ENCODE measurements at regions of chr5 and their contacts with region 1.

Region 1: GRCh38 chr5:173001229-173001841 is 17.8 kb downstream of the ATP6V0E1 start:
- DNase-seq: no peak
- H3K4me3 ChIP-seq: no peak overlapping the region
- H3K27ac ChIP-seq: no peak overlapping the region
- H3K4me1 ChIP-seq: peaks cover 7 to 50% (median 11%) of the 10 kb centered on the region in 4 donors
- H3K27me3 ChIP-seq: no peaks in the 10 kb centered on the region
- CTCF ChIP-seq: no peak
- EP300 ChIP-seq: no peak
- POLR2A ChIP-seq: no peak

Region 2: GRCh38 chr5:172086194-172087019 is 914.9 kb before region 1 on chr5:
- in situ Hi-C with region 1: no loop called
- intact Hi-C with region 1: no loop called
- DNase-seq: no peak
- H3K4me3 ChIP-seq: no peak overlapping the region
- H3K27ac ChIP-seq: no peak overlapping the region
- H3K4me1 ChIP-seq: no peaks in the 10 kb centered on the region
- H3K27me3 ChIP-seq: no peaks in the 10 kb centered on the region
- CTCF ChIP-seq: no peak
- EP300 ChIP-seq: no peak
- POLR2A ChIP-seq: no peak

Region 3: GRCh38 chr5:173144200-173145176 is 143.2 kb after region 1 on chr5 and contains the start of gene BNIP1:
- in situ Hi-C with region 1: loop called in 1 of 4 experiments (anchors 10 kb)
- intact Hi-C with region 1: no loop called
- DNase-seq: peak; percentile 99
- H3K4me3 ChIP-seq: peak within 1 kb of the TSS; percentile 59 to 96 (median 77)
- H3K27ac ChIP-seq: peak within 1 kb of the TSS; percentile 87 to 95 (median 90)
- H3K4me1 ChIP-seq: peaks cover 0 to 13% (median 6%) of the 10 kb centered on the region in 4 donors
- H3K27me3 ChIP-seq: no peaks in the 10 kb centered on the region
- CTCF ChIP-seq: peak; percentile 86 to 97 (median 92)
- EP300 ChIP-seq: no peak
- POLR2A ChIP-seq: peak; percentile 75
- total RNA-seq, gene BNIP1: 6.0 to 7.2 TPM in 2 of 4 donors, not detected in the others

Region 4: GRCh38 chr5:173557123-173557903 is 556.0 kb after region 1 on chr5:
- in situ Hi-C with region 1: no loop called
- intact Hi-C with region 1: no loop called
- DNase-seq: no peak
- H3K4me3 ChIP-seq: no peak overlapping the region
- H3K27ac ChIP-seq: no peak overlapping the region
- H3K4me1 ChIP-seq: no peaks in the 10 kb centered on the region
- H3K27me3 ChIP-seq: peaks cover 6% of the 10 kb centered on the region
- CTCF ChIP-seq: no peak
- EP300 ChIP-seq: no peak
- POLR2A ChIP-seq: no peak

Measured in transverse colon (tissue), 4 donors.